ENCODE measurements at regions of chr5 and their contacts with region 1.

Region 1: DNA sequence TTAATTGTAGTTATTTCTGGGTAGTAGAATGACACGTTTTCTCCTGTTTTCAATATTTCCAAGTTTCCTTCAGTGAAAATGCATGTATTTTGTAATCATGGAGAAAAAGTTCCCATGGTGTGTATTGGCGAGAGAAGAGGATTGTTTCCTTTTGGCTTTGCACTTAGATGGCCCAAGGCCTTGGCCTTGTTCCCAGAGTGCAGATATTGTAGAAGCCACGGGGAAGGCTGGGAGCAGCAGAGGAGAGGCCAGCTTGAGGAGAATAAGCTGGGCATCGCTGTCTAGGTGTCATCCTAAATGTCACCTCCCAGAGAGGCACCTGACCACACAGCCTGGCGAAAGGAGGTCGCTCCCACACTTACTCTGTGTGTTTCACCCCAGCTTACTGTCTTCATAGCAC is 43.9 kb downstream of the IRF1 start:
- DNase-seq: peak; percentile 75 to 91
- ATAC-seq: peak; percentile 75 to 91
- H3K4me3 ChIP-seq: no peak overlapping the region
- H3K27ac ChIP-seq: peak overlapping the region; percentile 15 to 85 (median 66)
- H3K4me1 ChIP-seq: peaks cover 41 to 46% of the 10 kb centered on the region in 2 donors
- H3K27me3 ChIP-seq: no peaks in the 10 kb centered on the region
- CTCF ChIP-seq: no peak
- POLR2A ChIP-seq: no peak

Region 2: GRCh38 chr5:131968396-131968954 is 478.2 kb before region 1 on chr5:
- in situ Hi-C with region 1: no loop called
- intact Hi-C with region 1: no loop called
- DNase-seq: no peak
- ATAC-seq: no peak
- H3K4me3 ChIP-seq: no peak overlapping the region
- H3K27ac ChIP-seq: no peak overlapping the region
- H3K4me1 ChIP-seq: no peaks in the 10 kb centered on the region
- H3K27me3 ChIP-seq: no peaks in the 10 kb centered on the region
- CTCF ChIP-seq: no peak
- POLR2A ChIP-seq: no peak

Region 3: DNA sequence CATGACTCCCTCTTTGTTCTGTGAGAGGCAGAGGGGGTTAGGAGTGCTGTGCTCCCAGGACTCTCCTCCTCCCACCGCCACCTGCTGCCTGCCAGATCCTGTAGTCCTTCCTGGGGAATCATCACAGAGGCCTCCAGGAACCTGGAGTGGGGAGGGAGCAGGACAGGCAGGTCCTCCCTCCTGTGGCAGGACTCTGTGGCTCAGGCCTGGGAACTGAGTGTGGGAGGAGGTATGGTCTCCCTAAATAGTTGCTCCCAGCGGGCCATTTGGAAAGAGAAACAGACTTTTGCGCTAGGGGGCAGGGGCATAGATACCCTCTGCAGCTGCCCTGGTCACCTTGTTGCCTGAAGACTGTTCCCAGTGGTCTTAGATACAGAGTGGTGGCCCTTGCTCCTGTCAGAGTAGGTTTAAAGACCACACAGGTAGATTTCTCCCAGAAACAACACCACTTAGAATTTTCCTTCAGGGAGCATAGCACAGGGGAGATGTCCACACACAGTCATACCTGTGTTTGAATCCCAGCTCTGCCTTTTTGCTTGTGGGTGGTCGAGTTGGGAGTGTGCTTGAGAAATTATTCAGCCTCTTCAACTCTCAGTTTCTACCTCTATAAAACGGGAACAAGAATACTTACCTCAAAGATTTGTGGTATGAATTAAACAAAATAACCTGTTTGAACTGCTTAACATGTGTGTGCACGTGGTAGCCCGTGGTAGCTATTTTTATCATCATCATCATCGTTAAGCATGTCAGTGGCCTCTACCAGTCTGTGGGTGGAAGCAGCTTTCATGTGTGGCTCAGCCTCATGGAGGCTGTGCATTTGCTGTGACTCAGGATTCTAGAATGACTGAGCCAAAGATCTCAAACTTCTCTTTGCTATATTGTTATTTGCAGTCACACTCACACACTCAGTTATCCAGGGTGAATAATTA is 21.4 kb before region 1 on chr5:
- in situ Hi-C with region 1: no loop called
- intact Hi-C with region 1: loop called (anchors 2 kb)
- DNase-seq: peak in 1 of 2 donors; percentile 47
- ATAC-seq: peak in 1 of 2 donors; percentile 30
- H3K4me3 ChIP-seq: no peak overlapping the region
- H3K27ac ChIP-seq: peak overlapping the region; percentile 81 to 99 (median 94)
- H3K4me1 ChIP-seq: peaks cover 91 to 99% of the 10 kb centered on the region in 2 donors
- H3K27me3 ChIP-seq: no peaks in the 10 kb centered on the region
- CTCF ChIP-seq: no peak
- POLR2A ChIP-seq: peak; percentile 19 to 22

Region 4: GRCh38 chr5:132480042-132480441 is 33.4 kb after region 1 on chr5:
- in situ Hi-C with region 1: no loop called
- intact Hi-C with region 1: loop called (anchors 5 kb)
- DNase-seq: no peak
- ATAC-seq: no peak
- H3K4me3 ChIP-seq: no peak overlapping the region
- H3K27ac ChIP-seq: no peak overlapping the region
- H3K4me1 ChIP-seq: peaks cover 0 to 5% of the 10 kb centered on the region in 2 donors
- H3K27me3 ChIP-seq: no peaks in the 10 kb centered on the region
- CTCF ChIP-seq: no peak
- POLR2A ChIP-seq: no peak

Measured in gastrocnemius medialis (tissue), 4 donors.